Tibial artery (tissue), 4 donors: ENCODE measurements at regions of chr16 and their contacts with region 1.

Region 1: DNA sequence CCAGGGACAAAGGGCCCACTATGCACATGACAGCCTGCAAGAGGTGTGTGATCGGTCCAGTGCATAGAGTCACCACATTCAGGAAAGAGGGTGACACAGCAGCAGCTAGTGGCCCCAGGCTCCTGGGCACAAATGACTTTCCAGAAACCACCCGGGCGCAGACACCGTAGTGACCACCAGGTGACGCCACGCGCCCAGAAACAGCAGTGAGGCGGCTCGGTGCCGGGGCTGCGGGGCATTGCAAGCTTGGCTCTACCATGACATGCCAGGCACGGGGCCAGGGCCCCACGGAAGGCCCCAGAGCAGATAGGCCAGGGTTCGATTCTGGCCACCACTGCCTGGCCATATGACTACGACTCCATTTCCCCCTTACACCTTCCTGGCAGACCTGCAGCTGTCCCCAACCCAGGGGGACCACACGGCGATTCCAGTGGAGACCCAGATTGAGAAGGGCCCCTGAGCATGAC is 6.7 kb downstream of the RHBDF1 start:
- DNase-seq: peak; percentile 87 to 90
- H3K4me3 ChIP-seq: no peak overlapping the region
- H3K27ac ChIP-seq: peak overlapping the region; percentile 51 to 97
- H3K4me1 ChIP-seq: peaks cover 0 to 59% (median 57%) of the 10 kb centered on the region in 4 donors
- H3K27me3 ChIP-seq: no peaks in the 10 kb centered on the region
- CTCF ChIP-seq: peak; percentile 96 to 99

Region 2: GRCh38 chr16:96935-97381 is 31.3 kb after region 1 on chr16:
- intact Hi-C with region 1: loop called (anchors 2 kb)
- DNase-seq: peak; percentile 96
- H3K4me3 ChIP-seq: no peak overlapping the region
- H3K27ac ChIP-seq: peak overlapping the region; percentile 24 to 93
- H3K4me1 ChIP-seq: peaks cover 0 to 58% (median 47%) of the 10 kb centered on the region in 4 donors
- H3K27me3 ChIP-seq: no peaks in the 10 kb centered on the region
- CTCF ChIP-seq: peak; percentile 99 to 100